Left cardiac atrium (tissue), 4 donors: ENCODE measurements at regions of chr9 and their contacts with region 1.

Region 1: GRCh38 chr9:19298436-19299000 is 68.0 kb downstream of the DENND4C start:
- DNase-seq: no peak
- ATAC-seq: no peak

Region 2: GRCh38 chr9:18566121-18566520 is 732.4 kb before region 1 on chr9:
- intact Hi-C with region 1: no loop called
- DNase-seq: no peak
- ATAC-seq: no peak

Region 3: GRCh38 chr9:18874069-18874468 is 424.4 kb before region 1 on chr9:
- intact Hi-C with region 1: no loop called
- DNase-seq: no peak
- ATAC-seq: no peak

Region 4: GRCh38 chr9:19199012-19199411 is 99.5 kb before region 1 on chr9:
- intact Hi-C with region 1: loop called in 1 of 2 experiments (anchors 10 kb)
- DNase-seq: no peak
- ATAC-seq: no peak

Region 5: GRCh38 chr9:19342947-19343346 is 44.4 kb after region 1 on chr9:
- intact Hi-C with region 1: no loop called
- DNase-seq: no peak
- ATAC-seq: no peak

Region 6: DNA sequence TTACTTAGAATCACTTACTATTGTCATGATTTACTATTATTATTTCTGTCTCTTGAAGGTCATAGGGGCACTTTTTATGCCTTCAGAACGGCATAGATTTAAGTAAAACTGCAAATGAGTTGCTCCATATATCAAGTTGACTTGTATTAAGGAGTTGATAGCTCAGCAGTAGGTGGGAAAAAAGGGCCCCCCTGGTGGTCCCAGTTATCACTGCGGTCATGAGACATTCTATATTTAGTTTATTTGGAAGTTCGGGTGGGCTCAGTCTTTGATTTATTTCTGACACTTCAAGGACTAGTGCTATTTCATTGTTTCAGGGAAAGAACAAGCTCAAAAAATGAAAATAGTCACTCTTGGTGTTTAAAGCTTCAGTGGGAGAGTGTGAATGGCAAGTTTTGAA is 331.0 kb after region 1 on chr9:
- intact Hi-C with region 1: no loop called
- DNase-seq: no peak
- ATAC-seq: no peak